Mammary epithelial cell (primary cell): ENCODE measurements at regions of chr1 and their contacts with region 1.

Region 1: DNA sequence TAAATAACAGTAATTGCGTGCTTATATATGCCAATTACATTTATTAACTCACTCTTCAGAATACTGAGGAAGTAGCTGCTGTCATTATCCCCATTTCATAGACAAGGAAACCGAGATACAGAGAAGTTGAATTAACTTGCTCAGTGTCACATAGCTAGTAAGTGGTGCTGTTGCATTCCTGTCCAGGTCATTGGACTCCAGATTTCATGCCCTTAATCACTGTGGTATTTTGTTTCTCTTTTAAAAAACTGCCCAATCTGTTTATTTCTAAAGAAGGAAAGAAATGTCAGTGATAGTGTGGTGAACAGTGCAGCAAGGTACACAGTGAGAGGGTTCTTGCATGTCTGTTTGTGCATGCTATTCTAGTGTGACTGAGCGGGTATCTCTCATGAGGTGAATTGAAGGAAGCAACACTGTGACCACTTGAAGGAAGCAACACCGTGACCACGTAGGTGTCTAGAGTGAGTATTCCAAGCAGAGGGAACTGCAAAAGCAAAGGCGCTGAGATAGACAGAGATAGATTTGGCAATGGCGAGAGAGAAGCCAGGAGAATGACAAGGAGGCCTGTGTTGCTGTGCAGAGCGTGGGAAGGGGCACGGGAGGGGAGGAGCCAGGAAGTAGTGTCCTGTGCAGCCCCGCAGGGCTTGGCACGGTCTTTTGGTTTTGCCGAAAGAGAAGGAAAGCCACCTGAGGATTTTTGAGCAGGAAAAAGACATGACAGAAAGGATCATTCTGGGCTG is 95.9 kb downstream of the CAMTA1 start:
- DNase-seq: peak; percentile 58
- H3K4me3 ChIP-seq: no peak overlapping the region
- H3K27ac ChIP-seq: peak overlapping the region; percentile 13
- H3K4me1 ChIP-seq: peaks cover 13% of the 10 kb centered on the region
- H3K27me3 ChIP-seq: no peaks in the 10 kb centered on the region
- CTCF ChIP-seq: no peak

Region 2: GRCh38 chr1:6800745-6801144 is 80.4 kb before region 1 on chr1:
- CTCF ChIA-PET with region 1: no interaction called
- dilution Hi-C with region 1: loop called (anchors 5 kb)
- in situ Hi-C with region 1: loop called in 1 of 2 experiments (anchors 10 kb)
- intact Hi-C with region 1: no loop called
- DNase-seq: no peak
- H3K4me3 ChIP-seq: no peak overlapping the region
- H3K27ac ChIP-seq: no peak overlapping the region
- H3K4me1 ChIP-seq: peaks cover 17% of the 10 kb centered on the region
- H3K27me3 ChIP-seq: no peaks in the 10 kb centered on the region
- CTCF ChIP-seq: no peak